ENCODE measurements at regions of chr13 and their contacts with region 1.

Region 1: GRCh38 chr13:80481588-80481987 is 140.7 kb upstream of the SPRY2 start:
- DNase-seq: no peak
- H3K4me3 Mint-ChIP-seq: no peak overlapping the region
- H3K27ac Mint-ChIP-seq: no peak overlapping the region
- H3K4me1 Mint-ChIP-seq: peaks cover 17% of the 10 kb centered on the region
- H3K27me3 Mint-ChIP-seq: no peaks in the 10 kb centered on the region
- CTCF ChIP-seq: no peak

Region 2: GRCh38 chr13:80469853-80470381 is 11.7 kb before region 1 on chr13:
- CTCF ChIA-PET with region 1: interaction called, 3 read pairs
- POLR2A ChIA-PET with region 1: interaction called, 10 read pairs
- intact Hi-C with region 1: no loop called
- DNase-seq: peak; percentile 92
- H3K4me3 Mint-ChIP-seq: peak overlapping the region; percentile 30
- H3K27ac Mint-ChIP-seq: peak overlapping the region; percentile 98
- H3K4me1 Mint-ChIP-seq: peaks cover 53% of the 10 kb centered on the region
- H3K27me3 Mint-ChIP-seq: no peaks in the 10 kb centered on the region
- CTCF ChIP-seq: no peak

Region 3: GRCh38 chr13:80586356-80586755 is 104.8 kb after region 1 on chr13:
- CTCF ChIA-PET with region 1: no interaction called
- POLR2A ChIA-PET with region 1: no interaction called
- intact Hi-C with region 1: no loop called
- DNase-seq: peak; percentile 31
- H3K4me3 Mint-ChIP-seq: no peak overlapping the region
- H3K27ac Mint-ChIP-seq: no peak overlapping the region
- H3K4me1 Mint-ChIP-seq: no peaks in the 10 kb centered on the region
- H3K27me3 Mint-ChIP-seq: no peaks in the 10 kb centered on the region
- CTCF ChIP-seq: no peak

Region 4: GRCh38 chr13:80726868-80727267 is 245.3 kb after region 1 on chr13:
- CTCF ChIA-PET with region 1: no interaction called
- POLR2A ChIA-PET with region 1: no interaction called
- intact Hi-C with region 1: no loop called
- DNase-seq: no peak
- H3K4me3 Mint-ChIP-seq: no peak overlapping the region
- H3K27ac Mint-ChIP-seq: no peak overlapping the region
- H3K4me1 Mint-ChIP-seq: no peaks in the 10 kb centered on the region
- H3K27me3 Mint-ChIP-seq: no peaks in the 10 kb centered on the region
- CTCF ChIP-seq: no peak

Measured in MCF 10A (cell line).